ENCODE measurements at regions of chr7 and their contacts with region 1.

Region 1: GRCh38 chr7:126119981-126120380 is 1132.8 kb downstream of the GRM8 start:
- DNase-seq: no peak
- ATAC-seq: no peak
- H3K4me3 ChIP-seq: no peak overlapping the region
- H3K27ac ChIP-seq: no peak overlapping the region
- H3K4me1 ChIP-seq: no peaks in the 10 kb centered on the region
- H3K27me3 ChIP-seq: no peaks in the 10 kb centered on the region
- CTCF ChIP-seq: no peak

Region 2: DNA sequence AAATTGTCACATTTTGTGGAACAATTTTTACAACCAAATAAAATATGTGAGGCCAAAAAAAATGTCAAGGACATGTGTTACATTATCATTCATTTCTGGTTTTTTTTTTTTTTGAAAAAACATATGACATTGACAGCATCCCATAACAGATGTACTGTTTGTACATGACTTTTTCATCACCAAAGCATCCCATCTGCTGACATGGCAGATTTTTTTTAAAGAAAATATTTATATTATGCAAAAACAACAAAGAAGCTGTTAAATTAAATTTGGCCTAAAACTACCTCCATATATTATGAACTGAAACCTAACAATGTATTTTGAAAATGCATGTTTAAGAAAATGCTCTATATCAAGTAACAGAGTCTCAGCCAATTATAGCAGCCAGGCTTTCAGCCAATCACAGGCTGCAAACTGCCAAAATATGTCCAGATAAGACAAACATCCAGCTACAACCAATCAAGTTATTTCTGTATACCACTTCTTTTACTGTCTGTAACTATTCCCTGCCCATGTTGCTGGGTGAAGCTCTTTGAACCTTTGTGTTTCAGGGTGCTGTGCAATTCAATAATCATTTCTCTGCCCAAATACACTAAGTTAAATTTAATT is 21.0 kb after region 1 on chr7:
- intact Hi-C with region 1: loop called in 1 of 10 experiments (anchors 1 kb)
- DNase-seq: no peak
- ATAC-seq: peak in 3 of 8 donors; percentile 48 to 62 (median 55)
- H3K4me3 ChIP-seq: no peak overlapping the region
- H3K27ac ChIP-seq: no peak overlapping the region
- H3K4me1 ChIP-seq: peaks cover 0 to 7% (median 0%) of the 10 kb centered on the region in 9 donors
- H3K27me3 ChIP-seq: no peaks in the 10 kb centered on the region
- CTCF ChIP-seq: no peak